ENCODE measurements at regions of chr1 and their contacts with region 1.

Region 1: GRCh38 chr1:46724991-46725735 is 6.2 kb upstream of the EFCAB14 start:
- DNase-seq: peak; percentile 73 to 77
- H3K4me3 ChIP-seq: no peak overlapping the region
- H3K27ac ChIP-seq: no peak overlapping the region
- H3K4me1 ChIP-seq: peaks cover 0 to 6% (median 0%) of the 10 kb centered on the region in 4 donors
- H3K27me3 ChIP-seq: peaks cover 0 to 24% of the 10 kb centered on the region in 2 donors
- CTCF ChIP-seq: peak; percentile 82 to 87

Region 2: GRCh38 chr1:46406881-46407608 is 318.1 kb before region 1 on chr1:
- intact Hi-C with region 1: loop called (anchors 2 kb)
- DNase-seq: no peak
- H3K4me3 ChIP-seq: peak overlapping the region; percentile 30 to 31
- H3K27ac ChIP-seq: no peak overlapping the region
- H3K4me1 ChIP-seq: peaks cover 0 to 20% (median 10%) of the 10 kb centered on the region in 4 donors
- H3K27me3 ChIP-seq: no peaks in the 10 kb centered on the region
- CTCF ChIP-seq: no peak

Region 3: GRCh38 chr1:46581681-46582455 is 143.3 kb before region 1 on chr1:
- intact Hi-C with region 1: no loop called
- DNase-seq: no peak
- H3K4me3 ChIP-seq: no peak overlapping the region
- H3K27ac ChIP-seq: no peak overlapping the region
- H3K4me1 ChIP-seq: no peaks in the 10 kb centered on the region
- H3K27me3 ChIP-seq: no peaks in the 10 kb centered on the region
- CTCF ChIP-seq: no peak

Region 4: DNA sequence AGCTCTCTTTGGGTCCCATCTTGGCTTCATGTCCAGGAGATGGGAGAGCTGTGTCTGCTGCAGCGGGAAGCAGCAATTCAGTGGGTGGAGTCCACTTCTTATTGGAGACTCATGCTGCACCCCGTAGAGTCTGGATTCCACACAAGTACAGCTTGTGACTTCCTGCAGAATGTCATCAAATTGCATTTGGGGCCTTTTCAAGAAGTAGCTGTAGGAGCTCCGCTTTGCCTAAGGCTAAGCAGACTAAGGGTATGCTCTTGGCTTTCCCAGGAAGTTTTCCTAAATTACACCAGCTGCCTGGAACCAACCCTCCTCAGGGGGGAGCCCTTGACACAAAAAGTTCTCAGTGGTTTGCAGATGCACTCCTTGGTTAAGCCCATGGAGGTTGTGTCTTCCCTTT is 102.8 kb before region 1 on chr1:
- intact Hi-C with region 1: loop called (anchors 5 kb)
- DNase-seq: peak in 1 of 2 donors; percentile 50
- H3K4me3 ChIP-seq: no peak overlapping the region
- H3K27ac ChIP-seq: no peak overlapping the region
- H3K4me1 ChIP-seq: peaks cover 0 to 4% (median 1%) of the 10 kb centered on the region in 4 donors
- H3K27me3 ChIP-seq: no peaks in the 10 kb centered on the region
- CTCF ChIP-seq: peak in 1 of 2 experiments; percentile 31